ENCODE measurements at regions of chr13 and their contacts with region 1.

Region 1: DNA sequence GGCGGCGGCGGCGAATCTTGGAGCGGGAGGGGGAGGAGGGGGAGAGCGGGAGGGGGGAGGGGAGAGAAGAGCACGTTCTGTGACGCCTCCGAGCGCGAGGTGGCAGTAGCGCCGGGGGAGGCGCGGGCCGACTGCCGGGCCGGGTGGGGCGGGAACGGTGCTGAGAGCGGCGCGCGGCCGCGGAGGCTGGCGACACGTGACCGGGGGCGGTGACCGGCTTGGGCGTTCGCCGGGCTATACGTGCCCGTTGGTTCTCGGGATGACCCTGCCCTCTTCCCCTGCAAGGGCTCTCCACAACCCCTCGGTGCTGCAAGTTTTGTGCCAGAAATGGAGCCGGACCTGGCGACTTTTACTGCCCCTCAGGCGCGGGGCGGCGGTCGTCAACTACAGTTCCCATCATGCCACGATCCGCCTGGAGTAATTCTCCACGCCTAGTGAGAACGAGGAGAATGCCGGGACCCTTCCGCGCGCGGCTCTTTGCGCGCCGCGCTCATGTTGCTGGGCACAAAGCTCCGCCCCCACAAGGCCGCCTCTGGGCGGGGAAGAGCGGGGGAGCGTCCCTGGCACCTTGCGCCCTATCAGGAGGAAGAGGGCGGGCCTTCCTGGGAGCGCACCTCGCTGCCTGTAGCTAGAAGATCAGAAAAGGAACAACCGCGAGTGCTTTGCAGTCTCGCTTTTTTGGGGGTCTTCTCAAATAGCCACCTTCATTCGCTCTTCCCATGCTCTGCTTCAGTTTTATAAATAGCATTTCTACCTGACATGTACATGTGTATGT is at the start of gene KPNA3:
- DNase-seq: peak; percentile 95
- H3K4me3 ChIP-seq: peak within 1 kb of the TSS; percentile 62 to 79 (median 70)
- H3K27ac ChIP-seq: peak within 1 kb of the TSS; percentile 86
- H3K4me1 ChIP-seq: peaks cover 10% of the 10 kb centered on the region
- H3K27me3 ChIP-seq: no peaks in the 10 kb centered on the region
- CTCF ChIP-seq: no peak
- total RNA-seq, gene KPNA3: 35.5 to 37.7 TPM

Region 2: GRCh38 chr13:49690992-49691886 is 101.5 kb before region 1 on chr13 and contains the start of gene EBPL:
- CTCF ChIA-PET with region 1: no interaction called
- dilution Hi-C with region 1: no loop called
- in situ Hi-C with region 1: no loop called
- intact Hi-C with region 1: loop called (anchors 1 kb)
- DNase-seq: peak; percentile 98
- H3K4me3 ChIP-seq: peak within 1 kb of the TSS; percentile 61 to 73 (median 61)
- H3K27ac ChIP-seq: peak within 1 kb of the TSS; percentile 80
- H3K4me1 ChIP-seq: peaks cover 5% of the 10 kb centered on the region
- H3K27me3 ChIP-seq: no peaks in the 10 kb centered on the region
- CTCF ChIP-seq: no peak
- total RNA-seq, gene EBPL: 26.7 to 46.1 TPM

Region 3: GRCh38 chr13:49844181-49844580 is 51.4 kb after region 1 on chr13:
- CTCF ChIA-PET with region 1: no interaction called
- dilution Hi-C with region 1: no loop called
- in situ Hi-C with region 1: no loop called
- intact Hi-C with region 1: loop called (anchors 2 kb)
- DNase-seq: no peak
- H3K4me3 ChIP-seq: no peak overlapping the region
- H3K27ac ChIP-seq: no peak overlapping the region
- H3K4me1 ChIP-seq: no peaks in the 10 kb centered on the region
- H3K27me3 ChIP-seq: no peaks in the 10 kb centered on the region
- CTCF ChIP-seq: no peak

Region 4: GRCh38 chr13:49858183-49858856 is 65.6 kb after region 1 on chr13:
- CTCF ChIA-PET with region 1: no interaction called
- dilution Hi-C with region 1: no loop called
- in situ Hi-C with region 1: no loop called
- intact Hi-C with region 1: no loop called
- DNase-seq: peak; percentile 79
- H3K4me3 ChIP-seq: no peak overlapping the region
- H3K27ac ChIP-seq: peak overlapping the region; percentile 46
- H3K4me1 ChIP-seq: peaks cover 22% of the 10 kb centered on the region
- H3K27me3 ChIP-seq: no peaks in the 10 kb centered on the region
- CTCF ChIP-seq: no peak

Region 5: DNA sequence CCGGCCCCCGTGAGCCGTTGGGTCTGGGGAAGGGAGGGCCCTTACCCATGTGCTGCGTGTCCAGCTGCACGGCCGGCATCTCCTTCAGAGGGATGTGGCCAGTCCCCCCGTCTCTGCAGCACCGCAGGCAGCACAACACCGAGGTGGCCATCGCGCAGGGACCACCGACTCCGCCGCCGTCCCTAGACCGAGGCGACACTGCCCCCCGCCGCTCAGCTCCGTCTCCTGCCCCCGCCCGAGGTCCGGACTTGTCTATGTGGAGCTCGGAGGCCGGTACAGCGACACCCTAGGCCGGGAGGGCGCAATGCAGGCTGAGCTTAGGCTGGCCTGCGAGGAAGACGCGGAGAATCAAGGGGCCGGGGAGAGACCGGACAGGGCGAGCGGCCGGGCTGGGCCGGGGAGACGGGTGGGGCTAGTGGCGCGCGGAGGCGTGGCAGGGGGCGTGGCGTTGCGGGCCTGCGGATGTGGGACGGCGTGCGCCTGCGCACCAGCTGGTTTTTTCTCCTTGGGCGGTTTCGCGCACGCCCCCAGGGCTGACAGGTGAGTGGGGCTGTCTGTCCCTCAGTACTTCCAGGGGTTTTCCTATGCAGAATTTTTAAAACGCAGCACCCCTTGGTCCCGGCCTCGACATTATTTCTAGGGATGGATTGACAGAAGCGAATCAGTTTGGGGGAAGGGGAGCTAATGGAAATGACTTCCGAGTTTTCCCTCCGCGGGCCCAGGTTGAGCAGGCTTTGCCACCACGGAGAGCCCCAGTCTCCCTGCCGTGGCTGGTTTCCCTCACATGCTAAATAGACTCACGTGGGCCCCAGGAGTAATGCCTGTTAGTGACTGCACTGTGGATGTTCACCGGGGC is 143.6 kb after region 1 on chr13 and contains the start of gene SPRYD7:
- CTCF ChIA-PET with region 1: interaction called, 3 read pairs
- dilution Hi-C with region 1: no loop called
- in situ Hi-C with region 1: no loop called
- intact Hi-C with region 1: loop called (anchors 2 kb)
- DNase-seq: peak; percentile 98
- H3K4me3 ChIP-seq: peak within 1 kb of the TSS; percentile 94 to 100 (median 99)
- H3K27ac ChIP-seq: peak within 1 kb of the TSS; percentile 82
- H3K4me1 ChIP-seq: peaks cover 5% of the 10 kb centered on the region
- H3K27me3 ChIP-seq: no peaks in the 10 kb centered on the region
- CTCF ChIP-seq: peak; percentile 82 to 92
- total RNA-seq, gene SPRYD7: 12.0 to 17.0 TPM

Region 6: GRCh38 chr13:50594276-50595051 is 801.7 kb after region 1 on chr13:
- CTCF ChIA-PET with region 1: interaction called, 16 read pairs
- dilution Hi-C with region 1: no loop called
- in situ Hi-C with region 1: no loop called
- intact Hi-C with region 1: no loop called
- DNase-seq: no peak
- H3K4me3 ChIP-seq: no peak overlapping the region
- H3K27ac ChIP-seq: no peak overlapping the region
- H3K4me1 ChIP-seq: peaks cover 28% of the 10 kb centered on the region
- H3K27me3 ChIP-seq: no peaks in the 10 kb centered on the region
- CTCF ChIP-seq: no peak

Measured in mammary epithelial cell (primary cell).